Heart right ventricle (tissue), 16 donors: ENCODE measurements at regions of chr2 and their contacts with region 1.

Region 1: DNA sequence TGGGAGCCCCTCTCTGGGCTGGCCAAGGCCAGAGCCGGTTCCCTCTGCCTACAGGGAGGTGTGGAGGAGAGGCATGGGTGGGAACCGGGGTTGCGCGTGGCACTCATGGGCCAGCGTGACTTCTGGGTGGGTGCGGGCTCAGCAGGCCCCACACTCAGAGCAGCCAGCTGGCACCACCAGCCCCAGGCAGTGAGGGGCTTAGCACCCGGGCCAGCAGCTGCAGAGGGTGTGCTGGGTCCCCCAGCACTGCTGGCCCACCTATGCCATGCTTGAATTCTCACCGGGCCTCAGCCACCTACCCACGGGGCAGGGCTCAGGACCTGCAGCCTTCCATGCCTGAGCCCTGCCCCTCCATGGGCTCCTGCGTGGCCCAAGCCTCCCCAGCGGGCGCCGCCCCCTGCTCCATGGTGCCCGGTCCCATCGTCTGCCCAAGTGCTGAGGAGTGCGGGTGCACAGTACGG is 248.5 kb upstream of the HNMT start:
- DNase-seq: peak in 1 of 2 donors; percentile 3
- ATAC-seq: no peak
- H3K4me3 ChIP-seq: no peak overlapping the region
- H3K27ac ChIP-seq: no peak overlapping the region
- H3K4me1 ChIP-seq: no peaks in the 10 kb centered on the region
- H3K27me3 ChIP-seq: no peaks in the 10 kb centered on the region
- CTCF ChIP-seq: no peak

Region 2: DNA sequence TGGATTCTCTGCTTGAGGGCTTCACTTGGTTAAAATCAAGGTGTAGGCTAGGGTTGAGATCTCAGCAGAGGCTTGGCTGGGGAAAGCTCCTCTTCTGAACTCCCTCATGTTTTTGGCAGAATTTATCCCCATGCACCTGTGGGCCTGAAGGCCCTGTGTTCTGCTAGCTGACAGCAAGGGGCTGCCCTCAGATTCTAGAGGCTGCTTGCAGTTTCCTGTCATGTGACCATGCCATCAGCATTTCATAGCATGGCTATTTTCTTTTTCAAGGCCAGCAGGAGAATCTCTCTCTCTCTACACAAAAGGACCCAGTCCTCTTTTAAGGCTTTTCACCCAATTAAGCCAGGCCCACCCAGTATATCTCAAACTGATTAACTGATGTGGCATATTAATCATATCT is 266.3 kb before region 1 on chr2:
- intact Hi-C with region 1: no loop called
- DNase-seq: no peak
- ATAC-seq: no peak
- H3K4me3 ChIP-seq: no peak overlapping the region
- H3K27ac ChIP-seq: no peak overlapping the region
- H3K4me1 ChIP-seq: no peaks in the 10 kb centered on the region
- H3K27me3 ChIP-seq: no peaks in the 10 kb centered on the region
- CTCF ChIP-seq: no peak

Region 3: GRCh38 chr2:137964066-137964858 is 248.5 kb after region 1 on chr2 and contains the start of gene HNMT:
- intact Hi-C with region 1: no loop called
- DNase-seq: peak; percentile 13 to 27
- ATAC-seq: peak; percentile 67 to 86 (median 72)
- H3K4me3 ChIP-seq: peak within 1 kb of the TSS; percentile 12 to 63 (median 54)
- H3K27ac ChIP-seq: peak within 1 kb of the TSS; percentile 55 to 90 (median 80)
- H3K4me1 ChIP-seq: peaks cover 0 to 68% (median 15%) of the 10 kb centered on the region in 9 donors
- H3K27me3 ChIP-seq: no peaks in the 10 kb centered on the region
- CTCF ChIP-seq: no peak
- total RNA-seq, gene HNMT: 7.2 to 24.9 (median 10.8) TPM

Region 4: GRCh38 chr2:138137949-138138348 is 422.2 kb after region 1 on chr2:
- intact Hi-C with region 1: loop called in 1 of 10 experiments (anchors 10 kb)
- DNase-seq: no peak
- ATAC-seq: no peak
- H3K4me3 ChIP-seq: no peak overlapping the region
- H3K27ac ChIP-seq: no peak overlapping the region
- H3K4me1 ChIP-seq: no peaks in the 10 kb centered on the region
- H3K27me3 ChIP-seq: no peaks in the 10 kb centered on the region
- CTCF ChIP-seq: no peak